Naive thymus-derived CD8-positive, alpha-beta T cell (primary cell): ENCODE measurements at regions of chr9 and their contacts with region 1.

Region 1: DNA sequence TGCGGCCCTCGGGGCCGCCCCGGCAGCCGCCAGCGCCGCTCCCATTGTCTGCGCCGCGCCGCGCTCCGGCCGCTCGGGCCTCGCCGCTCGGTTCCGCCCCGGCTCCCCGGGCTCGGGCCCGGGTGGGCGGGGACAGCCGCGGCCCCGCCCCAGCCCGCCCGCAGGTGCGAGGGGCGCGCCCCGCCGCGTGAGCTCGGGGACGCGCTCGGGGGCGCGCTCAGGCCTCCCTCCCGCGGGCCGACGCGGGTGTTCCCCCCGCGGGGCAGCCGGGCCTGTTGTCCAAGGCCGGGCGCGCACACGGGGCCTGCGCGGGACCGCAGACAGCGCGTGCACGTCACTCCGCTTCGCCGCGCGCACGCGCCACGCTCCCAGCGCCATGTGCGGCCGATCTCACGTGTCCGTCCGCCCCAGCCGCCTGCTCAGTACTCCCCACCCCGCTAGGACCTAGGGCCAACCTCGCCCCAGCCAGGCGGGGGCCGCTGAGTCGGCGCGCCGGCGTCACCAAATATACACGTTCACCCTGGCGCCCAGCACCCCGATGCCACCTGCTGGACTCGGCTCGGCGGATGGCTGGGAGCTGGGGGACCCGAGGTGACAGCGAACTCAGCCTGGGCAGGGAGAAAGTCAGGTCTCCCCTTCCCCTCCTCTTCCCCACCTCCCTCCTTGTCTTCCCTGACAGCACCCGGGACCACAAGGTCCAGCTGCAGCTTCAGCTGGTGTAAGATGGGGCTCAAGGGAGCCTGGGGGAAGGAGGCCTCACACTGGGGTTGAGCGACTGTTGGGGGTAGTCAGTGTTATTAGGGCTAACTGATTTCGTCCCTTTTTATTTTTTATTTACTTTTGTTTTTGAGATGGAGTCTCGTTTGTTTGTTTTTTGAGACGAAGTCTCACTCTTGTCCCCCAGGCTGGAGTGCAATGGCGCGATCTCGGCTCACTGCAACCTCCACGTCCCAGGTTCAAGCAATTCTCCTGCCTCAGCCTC is 14.3 kb downstream of the GBGT1 start:
- DNase-seq: peak; percentile 71 to 89 (median 74)
- ATAC-seq: peak; percentile 40 to 59
- H3K4me3 Mint-ChIP-seq: peak overlapping the region; percentile 67 to 85 (median 80)
- H3K27ac Mint-ChIP-seq: peak overlapping the region; percentile 66 to 93 (median 88)
- H3K4me1 Mint-ChIP-seq: peaks cover 20 to 42% (median 38%) of the 10 kb centered on the region in 4 donors
- H3K27me3 Mint-ChIP-seq: no peaks in the 10 kb centered on the region

Region 2: DNA sequence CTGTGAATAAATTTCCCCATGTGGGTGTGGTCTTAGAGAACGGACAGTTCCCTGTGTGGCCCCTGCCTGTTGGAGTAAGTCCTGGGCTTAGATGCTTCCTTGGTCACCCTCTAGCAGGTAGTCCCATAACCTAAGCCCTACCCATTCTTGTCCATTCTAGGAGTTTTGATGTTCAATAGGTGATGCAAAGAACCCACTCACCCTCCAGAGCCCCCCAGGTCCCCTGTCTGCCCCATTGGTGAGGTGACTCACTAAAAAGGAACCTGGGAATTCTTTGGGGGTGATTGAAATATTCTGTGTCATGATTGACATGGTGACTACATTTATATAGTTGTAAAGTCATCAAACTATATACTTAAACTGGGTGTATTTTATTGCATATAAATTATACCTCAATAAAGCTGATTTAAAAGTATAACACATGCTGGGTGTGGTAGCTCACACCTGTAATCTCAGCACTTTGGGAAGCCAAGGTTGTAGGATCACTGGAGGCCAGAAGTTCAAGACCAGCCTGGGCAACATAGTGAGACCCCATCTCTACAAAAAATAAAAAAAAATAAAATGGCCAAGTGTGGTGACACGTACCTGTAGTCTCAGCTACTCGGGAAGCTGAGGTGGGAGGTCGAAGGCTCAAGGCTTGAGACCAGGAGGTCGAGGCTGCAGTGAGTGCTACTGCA is 139.4 kb before region 1 on chr9:
- POLR2A ChIA-PET with region 1: no interaction called
- DNase-seq: no peak
- ATAC-seq: no peak
- H3K4me3 Mint-ChIP-seq: no peak overlapping the region
- H3K27ac Mint-ChIP-seq: no peak overlapping the region
- H3K4me1 Mint-ChIP-seq: no peaks in the 10 kb centered on the region
- H3K27me3 Mint-ChIP-seq: peaks cover 10 to 51% (median 36%) of the 10 kb centered on the region in 5 donors

Region 3: GRCh38 chr9:133030317-133031129 is 118.9 kb before region 1 on chr9 and contains the start of gene GTF3C5:
- POLR2A ChIA-PET with region 1: interaction called, 28 read pairs
- DNase-seq: peak; percentile 81 to 97 (median 92)
- ATAC-seq: peak; percentile 96
- H3K4me3 Mint-ChIP-seq: peak within 1 kb of the TSS; percentile 97 to 100 (median 99)
- H3K27ac Mint-ChIP-seq: peak within 1 kb of the TSS; percentile 97 to 99 (median 98)
- H3K4me1 Mint-ChIP-seq: peaks cover 22 to 75% (median 63%) of the 10 kb centered on the region in 4 donors
- H3K27me3 Mint-ChIP-seq: no peaks in the 10 kb centered on the region
- polyA plus RNA-seq, gene GTF3C5: 33.7 to 40.1 (median 37.8) TPM

Region 4: DNA sequence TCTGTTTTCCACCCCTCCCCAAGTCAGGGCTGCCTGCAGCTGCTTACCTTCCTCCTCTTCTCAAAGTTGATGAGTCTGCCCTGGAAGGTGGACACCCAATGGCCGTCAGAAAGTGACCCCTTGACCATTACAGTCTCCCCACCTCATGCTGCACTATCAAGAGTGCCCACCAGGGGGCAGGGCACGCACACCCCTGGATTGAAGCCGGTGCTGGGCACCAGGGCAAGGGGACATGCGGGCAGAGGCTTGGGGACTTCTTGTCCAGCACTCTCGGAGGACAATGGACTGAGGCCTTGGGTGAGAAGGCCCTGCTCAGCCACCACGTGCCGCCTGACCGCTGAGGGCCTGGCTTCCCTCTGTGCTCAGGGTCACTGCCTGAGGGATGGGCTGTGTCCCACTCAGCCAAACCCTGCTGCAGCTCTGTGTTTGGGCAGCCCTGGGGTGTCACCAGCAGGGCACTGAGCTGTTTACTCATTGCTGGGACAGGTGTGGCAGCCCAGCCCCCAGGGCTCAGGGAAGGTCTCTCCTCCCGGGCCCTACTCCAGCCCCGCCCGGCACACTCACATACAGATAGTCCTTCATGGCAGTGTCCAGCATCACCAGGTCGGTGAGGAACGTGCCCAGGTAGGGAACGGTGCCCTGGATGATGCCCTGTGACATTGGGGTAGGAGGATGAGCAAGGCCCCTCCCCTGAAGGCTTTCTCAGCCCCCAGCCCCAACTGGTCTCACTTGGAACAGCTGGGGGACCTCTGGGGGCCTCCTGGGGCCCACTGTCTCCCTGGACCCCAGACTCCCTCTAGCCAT is 46.0 kb before region 1 on chr9:
- POLR2A ChIA-PET with region 1: interaction called, 28 read pairs
- DNase-seq: peak in 9 of 10 donors; percentile 28 to 75 (median 56)
- ATAC-seq: peak; percentile 54 to 73
- H3K4me3 Mint-ChIP-seq: no peak overlapping the region
- H3K27ac Mint-ChIP-seq: peak overlapping the region in 7 of 10 donors; percentile 75 to 91 (median 88)
- H3K4me1 Mint-ChIP-seq: peaks cover 0 to 5% (median 0%) of the 10 kb centered on the region in 4 donors
- H3K27me3 Mint-ChIP-seq: no peaks in the 10 kb centered on the region

Region 5: DNA sequence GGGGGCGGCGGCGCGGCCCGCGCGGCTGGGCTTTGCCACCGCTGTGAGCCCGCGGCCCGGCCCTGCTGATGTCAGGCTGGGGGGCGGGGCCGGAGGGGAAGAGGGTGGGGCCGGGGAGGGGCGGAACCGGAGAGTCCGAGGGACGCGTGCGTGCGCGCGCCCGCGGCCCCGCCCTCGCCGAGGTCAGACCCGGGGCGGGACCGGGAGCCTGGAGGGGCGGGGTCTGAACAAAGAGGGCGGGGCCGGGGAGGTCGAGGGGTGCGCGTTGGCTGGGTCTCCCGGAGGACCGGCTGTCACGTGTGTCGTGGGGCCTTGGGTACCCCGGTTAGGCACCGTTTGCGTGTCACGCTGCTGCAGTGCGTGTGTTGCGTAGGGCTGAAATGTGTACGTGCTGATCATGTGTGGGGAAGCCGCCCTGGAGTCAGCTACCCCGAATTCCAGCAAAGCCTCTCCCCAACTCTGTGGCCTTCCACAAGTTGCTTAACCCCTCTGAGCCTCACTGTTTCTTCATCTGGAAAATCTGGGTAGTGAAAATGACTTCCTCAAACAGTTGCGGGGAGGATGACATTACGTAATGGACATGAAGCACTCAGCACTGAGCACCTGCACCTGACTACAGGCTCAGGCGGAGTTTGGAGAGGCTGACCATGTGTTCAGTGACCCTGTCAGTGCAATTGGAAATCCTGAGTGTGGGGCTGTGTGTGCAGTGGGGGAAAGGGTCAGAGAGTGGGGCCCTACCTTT is 28.0 kb before region 1 on chr9 and contains the start of gene RALGDS:
- POLR2A ChIA-PET with region 1: interaction called, 40 read pairs
- DNase-seq: peak; percentile 83 to 97 (median 88)
- ATAC-seq: peak; percentile 72 to 76
- H3K4me3 Mint-ChIP-seq: peak within 1 kb of the TSS; percentile 75 to 89 (median 82)
- H3K27ac Mint-ChIP-seq: peak within 1 kb of the TSS; percentile 90 to 100 (median 98)
- H3K4me1 Mint-ChIP-seq: peaks cover 36 to 74% (median 63%) of the 10 kb centered on the region in 4 donors
- H3K27me3 Mint-ChIP-seq: no peaks in the 10 kb centered on the region
- polyA plus RNA-seq, gene RALGDS: 14.1 to 35.5 (median 29.4) TPM

Region 6: GRCh38 chr9:133133681-133134418 is 15.6 kb before region 1 on chr9:
- POLR2A ChIA-PET with region 1: interaction called, 99 read pairs
- DNase-seq: peak; percentile 65 to 96 (median 89)
- ATAC-seq: peak; percentile 80 to 87
- H3K4me3 Mint-ChIP-seq: peak overlapping the region; percentile 61 to 92 (median 86)
- H3K27ac Mint-ChIP-seq: peak overlapping the region; percentile 100
- H3K4me1 Mint-ChIP-seq: peaks cover 35 to 72% (median 61%) of the 10 kb centered on the region in 4 donors
- H3K27me3 Mint-ChIP-seq: no peaks in the 10 kb centered on the region

Region 7: DNA sequence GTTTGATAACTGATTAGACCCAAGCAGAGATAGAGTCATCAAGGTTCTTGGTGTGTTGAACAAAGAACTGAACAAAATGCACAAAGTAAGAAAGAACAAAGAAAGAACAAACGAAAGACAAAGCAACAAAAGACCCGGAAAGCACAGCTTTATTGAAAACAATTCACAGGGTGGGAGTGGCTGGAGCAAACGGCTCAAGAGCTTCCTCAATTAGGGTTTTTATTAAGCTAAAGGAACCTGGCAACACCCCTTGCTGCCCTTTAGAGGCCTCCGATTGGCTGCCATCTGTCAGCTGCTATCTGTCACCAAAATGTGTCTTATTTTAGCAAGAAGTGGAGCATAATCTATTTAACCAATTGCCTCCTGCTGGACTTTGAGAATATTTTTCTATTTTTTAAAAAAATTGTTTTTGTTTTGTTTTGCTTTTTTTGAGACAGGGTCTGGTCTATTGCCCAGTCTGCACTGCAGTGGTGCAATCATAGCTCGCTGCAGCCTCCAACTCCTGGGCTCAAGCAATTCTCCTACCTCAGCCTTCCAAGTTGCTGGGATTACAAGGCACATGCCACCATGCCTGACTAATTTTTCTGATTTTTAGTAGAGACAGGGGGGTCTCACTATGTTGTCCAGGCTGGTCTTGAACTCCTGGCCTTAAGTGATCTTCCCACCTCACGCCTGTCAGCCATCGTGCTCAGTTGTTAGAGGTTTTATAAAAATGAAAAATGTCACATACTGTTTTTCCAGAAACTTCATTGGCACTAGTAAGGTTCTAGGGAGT is 133.2 kb after region 1 on chr9:
- POLR2A ChIA-PET with region 1: no interaction called
- DNase-seq: no peak
- ATAC-seq: no peak
- H3K4me3 Mint-ChIP-seq: no peak overlapping the region
- H3K27ac Mint-ChIP-seq: no peak overlapping the region
- H3K4me1 Mint-ChIP-seq: no peaks in the 10 kb centered on the region
- H3K27me3 Mint-ChIP-seq: peaks cover 5 to 30% (median 15%) of the 10 kb centered on the region in 5 donors